ENCODE measurements at regions of chr17 and their contacts with region 1.

Region 1: DNA sequence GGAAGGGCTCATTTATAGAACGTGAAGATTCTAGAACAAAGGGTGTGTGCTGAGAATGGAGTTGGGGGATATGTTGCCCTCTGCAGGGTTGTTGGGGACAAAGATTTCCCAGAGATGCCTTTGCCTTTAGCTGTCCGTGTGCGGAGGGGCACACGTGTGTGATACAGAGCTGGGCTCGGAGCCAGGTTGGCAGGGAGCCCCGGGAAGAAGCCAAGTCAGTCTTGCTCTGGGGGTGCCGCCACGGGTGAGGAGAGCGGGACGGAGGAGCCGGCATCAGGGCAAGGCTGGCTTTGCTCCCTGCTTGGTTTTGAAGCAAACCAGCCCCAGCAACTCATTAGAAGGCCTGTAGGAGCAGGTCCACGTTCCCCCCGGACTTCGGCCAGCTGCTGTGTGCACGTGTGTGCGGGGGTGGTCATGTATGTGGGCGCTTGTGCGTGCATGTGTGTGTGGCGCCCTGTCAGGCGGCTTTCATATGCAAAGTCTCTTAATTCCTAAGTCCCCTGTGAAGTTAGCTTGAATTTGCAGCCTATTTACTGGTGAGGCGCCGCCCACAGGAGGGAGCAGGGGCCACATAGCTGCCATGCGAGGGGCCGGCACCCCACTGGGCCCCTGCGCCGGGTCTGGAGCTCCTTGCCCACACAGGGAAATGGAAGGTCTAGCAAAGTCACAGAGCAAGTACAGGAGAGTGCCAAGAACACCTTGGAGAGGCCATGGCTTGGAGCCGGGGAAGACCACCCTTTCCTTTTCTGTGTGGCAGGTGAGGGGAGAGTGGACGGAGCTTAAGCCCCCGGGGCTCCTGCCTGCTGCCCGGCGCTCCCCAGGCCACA is 132.1 kb upstream of the CHMP6 start:
- DNase-seq: peak in 1 of 2 experiments; percentile 23
- H3K4me3 ChIP-seq: peak overlapping the region in 1 of 4 experiments; percentile 15; a peak in 3 of 8 replicates
- H3K27ac ChIP-seq: peak overlapping the region; percentile 15; the same call in 1 of the 2 replicates
- H3K4me1 ChIP-seq: peaks cover 4 to 24% (median 13%) of the 10 kb centered on the region in 4 experiments
- H3K27me3 ChIP-seq: no peaks in the 10 kb centered on the region
- CTCF ChIP-seq: peak in 1 of 3 experiments; percentile 0; a peak in 1 of 4 replicates
- EP300 ChIP-seq: no peak
- POLR2A ChIP-seq: no peak
- RAD21 ChIP-seq: 0 out of 4 replicates have a peak, but pooled peaks of 1 of the 2 experiments have one; percentile 6

Region 2: DNA sequence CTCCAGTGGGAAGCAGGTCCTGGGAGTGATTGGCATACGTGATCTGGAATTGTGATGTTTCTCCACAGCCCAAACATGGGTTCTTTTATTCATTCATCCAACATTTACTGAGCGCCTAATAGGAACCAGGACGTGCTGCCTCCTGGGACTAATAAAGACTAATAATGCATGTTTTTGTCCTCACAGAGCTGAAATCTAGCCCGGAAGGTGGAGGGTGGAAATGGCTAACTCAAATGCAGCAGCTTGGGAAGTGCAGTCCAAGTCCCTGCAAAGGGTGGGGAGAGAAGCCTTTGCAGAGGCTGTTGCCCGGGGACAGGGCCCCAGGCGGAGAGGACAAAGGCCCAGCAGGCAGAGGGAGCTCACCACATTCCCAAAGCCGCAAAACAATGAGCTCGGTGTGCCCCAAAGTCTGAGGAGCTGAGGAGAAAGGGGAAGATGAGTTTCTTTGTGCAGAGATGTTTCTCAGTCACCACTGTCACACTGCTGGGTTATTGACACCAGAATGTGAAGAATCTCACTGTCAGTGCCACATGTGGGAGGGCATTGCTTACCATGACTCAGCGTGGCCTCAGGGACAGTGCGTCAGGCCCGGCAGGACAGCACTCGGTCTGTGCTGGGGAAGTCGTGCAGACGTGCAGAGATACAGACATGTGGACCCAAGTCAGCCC is 13.9 kb after region 1 on chr17:
- CTCF ChIA-PET with region 1: interaction called, 18 read pairs
- POLR2A ChIA-PET with region 1: interaction called, 5 read pairs
- DNase-seq: peak in 1 of 2 experiments; percentile 38
- H3K4me3 ChIP-seq: peak overlapping the region in 1 of 4 experiments; percentile 30; a peak in 1 of 8 replicates
- H3K27ac ChIP-seq: peak overlapping the region; percentile 66; the same call in 1 of the 2 replicates
- H3K4me1 ChIP-seq: peaks cover 4 to 21% (median 14%) of the 10 kb centered on the region in 4 experiments
- H3K27me3 ChIP-seq: no peaks in the 10 kb centered on the region
- CTCF ChIP-seq: no peak
- EP300 ChIP-seq: no peak
- POLR2A ChIP-seq: no peak
- RAD21 ChIP-seq: no peak; a peak in 1 of 4 replicates